Caco-2 (cell line): ENCODE measurements at regions of chr18 and their contacts with region 1.

Region 1: DNA sequence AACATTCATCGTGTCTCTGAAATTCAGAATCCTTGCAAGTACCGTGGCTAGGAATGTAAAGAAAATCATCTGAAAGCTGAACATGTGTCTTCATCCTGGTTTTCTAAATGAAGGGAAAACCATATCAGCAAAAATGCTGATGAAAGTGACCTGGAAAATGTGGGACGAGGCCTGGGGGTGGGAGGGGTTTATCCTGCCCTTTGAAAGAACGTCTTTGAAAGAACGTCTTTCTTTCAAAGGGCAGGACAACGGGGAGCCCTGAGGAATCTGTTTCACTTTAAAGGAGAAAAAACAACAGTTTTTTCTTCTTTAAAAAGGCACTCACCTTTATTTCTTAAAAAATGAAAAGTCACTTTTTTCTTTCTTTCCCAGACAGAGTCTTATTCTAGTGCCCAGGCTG is 185.2 kb downstream of the ALPK2 start:
- DNase-seq: no peak
- H3K4me3 ChIP-seq: no peak overlapping the region
- H3K4me3 Mint-ChIP-seq: no peak overlapping the region
- H3K27ac Mint-ChIP-seq: no peak overlapping the region
- H3K4me1 ChIP-seq: peaks cover 4% of the 10 kb centered on the region; the same call in 1 of the 2 replicates
- H3K4me1 Mint-ChIP-seq: peaks cover 16% of the 10 kb centered on the region
- H3K27me3 ChIP-seq: no peaks in the 10 kb centered on the region
- H3K27me3 Mint-ChIP-seq: no peaks in the 10 kb centered on the region
- CTCF ChIP-seq: no peak

Region 2: GRCh38 chr18:58221060-58221725 is 222.5 kb before region 1 on chr18:
- CTCF ChIA-PET with region 1: no interaction called
- POLR2A ChIA-PET with region 1: no interaction called
- intact Hi-C with region 1: no loop called
- DNase-seq: peak; percentile 66 to 82
- H3K4me3 ChIP-seq: peak overlapping the region; percentile 39
- H3K4me3 Mint-ChIP-seq: peak overlapping the region; percentile 65
- H3K27ac Mint-ChIP-seq: no peak overlapping the region
- H3K4me1 ChIP-seq: peaks cover 21% of the 10 kb centered on the region
- H3K4me1 Mint-ChIP-seq: peaks cover 14% of the 10 kb centered on the region
- H3K27me3 ChIP-seq: no peaks in the 10 kb centered on the region
- H3K27me3 Mint-ChIP-seq: no peaks in the 10 kb centered on the region
- CTCF ChIP-seq: no peak

Region 3: GRCh38 chr18:58407649-58408407 is 35.8 kb before region 1 on chr18:
- CTCF ChIA-PET with region 1: interaction called, 3 read pairs
- POLR2A ChIA-PET with region 1: no interaction called
- intact Hi-C with region 1: loop called (anchors 5 kb)
- DNase-seq: peak; percentile 72 to 84
- H3K4me3 ChIP-seq: no peak overlapping the region
- H3K4me3 Mint-ChIP-seq: no peak overlapping the region
- H3K27ac Mint-ChIP-seq: no peak overlapping the region
- H3K4me1 ChIP-seq: peaks cover 39% of the 10 kb centered on the region
- H3K4me1 Mint-ChIP-seq: no peaks in the 10 kb centered on the region
- H3K27me3 ChIP-seq: no peaks in the 10 kb centered on the region
- H3K27me3 Mint-ChIP-seq: no peaks in the 10 kb centered on the region
- CTCF ChIP-seq: peak; percentile 18 to 30